Colonic mucosa (tissue), 4 donors: ENCODE measurements at regions of chr6 and their contacts with region 1.

Region 1: DNA sequence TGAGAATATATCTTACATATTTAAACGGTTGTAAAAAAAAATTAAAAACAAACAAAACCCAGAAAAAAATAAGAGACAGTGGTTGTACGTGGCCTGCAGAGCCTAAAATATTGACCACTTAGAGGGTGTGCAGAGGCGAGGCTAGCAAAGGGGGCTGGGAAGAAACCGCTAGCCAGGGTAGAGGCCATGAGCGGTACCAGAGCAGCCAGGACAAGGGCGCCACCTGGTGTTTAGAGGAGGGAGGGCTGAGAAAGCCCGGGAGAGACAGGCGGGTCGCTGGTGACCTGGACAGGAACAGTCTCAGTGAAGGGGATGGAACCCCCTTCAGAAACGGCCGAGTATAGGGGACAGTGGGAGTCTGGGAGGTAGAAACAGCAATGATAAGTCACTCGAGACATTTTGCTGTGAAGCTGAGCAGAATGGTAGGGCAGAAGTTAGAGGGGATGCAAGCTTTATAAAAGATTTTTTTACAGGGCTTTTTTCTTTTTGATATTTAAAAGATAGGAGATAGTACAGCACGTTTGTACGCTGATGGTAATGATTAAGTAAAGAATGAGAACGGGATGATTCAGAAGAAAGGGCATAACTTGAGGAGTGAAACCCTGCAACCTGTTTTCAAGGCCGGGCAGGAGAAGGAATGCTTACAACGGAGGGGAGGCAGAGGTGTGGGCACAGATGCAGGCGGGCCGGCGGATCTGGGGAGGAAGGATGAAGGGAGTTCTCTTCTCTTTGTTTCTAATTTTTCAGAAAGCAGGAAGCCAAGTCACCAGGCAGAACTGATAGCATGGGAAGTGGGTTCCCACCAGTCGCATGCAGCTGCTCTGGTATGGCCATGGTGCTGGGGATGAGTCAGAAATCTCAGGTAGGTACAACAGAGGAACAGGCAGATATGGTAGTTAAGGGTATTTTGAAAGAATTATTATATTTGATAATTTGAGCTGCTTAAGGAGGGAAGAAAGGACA is 76.2 kb downstream of the FAM229B start:
- DNase-seq: peak; percentile 65
- H3K4me3 ChIP-seq: no peak overlapping the region
- H3K27ac ChIP-seq: no peak overlapping the region
- H3K4me1 ChIP-seq: no peaks in the 10 kb centered on the region
- H3K27me3 ChIP-seq: no peaks in the 10 kb centered on the region
- CTCF ChIP-seq: peak; percentile 85

Region 2: DNA sequence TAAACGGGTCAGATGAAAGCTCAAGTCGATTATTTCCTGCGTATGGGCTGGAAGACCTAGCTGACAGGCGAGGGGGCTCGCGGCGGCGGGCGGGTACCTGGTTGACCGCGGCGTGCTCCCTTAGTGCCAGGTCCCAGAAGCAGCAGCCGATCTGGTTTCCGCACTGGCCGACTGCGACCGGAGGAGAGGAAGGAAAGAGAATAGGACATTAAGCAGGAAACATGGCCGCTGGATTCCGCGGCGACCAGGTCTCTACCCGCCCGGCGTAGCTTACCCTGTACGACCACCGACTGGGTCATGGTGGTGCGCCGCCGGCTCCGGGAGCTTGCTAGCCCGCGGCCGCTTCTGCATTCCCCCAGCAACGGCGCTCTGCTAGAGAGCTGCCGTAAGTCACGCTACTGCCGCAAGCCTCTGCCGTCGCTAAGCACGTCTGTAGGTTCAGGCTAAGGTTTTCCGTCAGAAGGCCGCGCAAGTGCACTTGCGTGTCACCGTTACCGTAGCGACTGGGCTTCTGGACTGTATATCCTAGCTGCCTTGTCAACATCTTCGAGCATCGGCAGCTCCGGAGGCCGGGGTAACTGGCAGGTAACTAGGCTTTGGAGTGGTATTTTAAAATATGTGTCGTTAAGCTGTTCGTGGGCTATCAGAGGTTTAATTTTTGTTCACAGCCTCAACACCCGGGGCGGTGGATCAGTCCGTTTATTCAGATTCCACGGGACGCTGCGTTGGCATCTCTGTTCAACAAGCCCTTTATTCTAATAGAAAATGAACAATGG is 76.3 kb before region 1 on chr6 and contains the starts of genes FAM229B and TUBE1:
- intact Hi-C with region 1: loop called (anchors 5 kb)
- DNase-seq: peak; percentile 94
- H3K4me3 ChIP-seq: peak within 1 kb of the TSS; percentile 79
- H3K27ac ChIP-seq: peak within 1 kb of the TSS; percentile 66
- H3K4me1 ChIP-seq: no peaks in the 10 kb centered on the region
- H3K27me3 ChIP-seq: no peaks in the 10 kb centered on the region
- CTCF ChIP-seq: no peak
- total RNA-seq, gene FAM229B: 1.3 to 4.9 TPM
- total RNA-seq, gene TUBE1: 7.1 to 14.9 TPM